Activated T-helper 1 cell treated with anti-CD3 and anti-CD28 coated beads, Interleukin-12 subunit alpha, Interleukin-12 subunit beta, Interleukin-2, Interleukin-4 antibody, amounts not matched to agents 30 ng/mL and 10 ng/mL and 1 ng/mL, durations not matched to agents 14 hours and 24 hours and 36 hours (primary cell): ENCODE measurements at regions of chr9 and their contacts with region 1.

Region 1: GRCh38 chr9:112333639-112334431 is 416 bp upstream of the PTBP3 start:
- DNase-seq: peak; percentile 88
- H3K4me3 Mint-ChIP-seq: peak overlapping the region; percentile 97
- H3K27ac Mint-ChIP-seq: peak overlapping the region; percentile 94
- H3K4me1 Mint-ChIP-seq: peaks cover 31% of the 10 kb centered on the region
- H3K27me3 Mint-ChIP-seq: peaks cover 2% of the 10 kb centered on the region

Region 2: GRCh38 chr9:111195766-111196165 is 1138.1 kb before region 1 on chr9:
- intact Hi-C with region 1: no loop called
- DNase-seq: no peak
- H3K4me3 Mint-ChIP-seq: no peak overlapping the region
- H3K27ac Mint-ChIP-seq: no peak overlapping the region
- H3K4me1 Mint-ChIP-seq: no peaks in the 10 kb centered on the region
- H3K27me3 Mint-ChIP-seq: no peaks in the 10 kb centered on the region

Region 3: GRCh38 chr9:111896353-111896958 is 437.4 kb before region 1 on chr9 and contains the start of gene UGCG:
- intact Hi-C with region 1: loop called (anchors 1 kb)
- DNase-seq: peak; percentile 86
- H3K4me3 Mint-ChIP-seq: peak within 1 kb of the TSS; percentile 90
- H3K27ac Mint-ChIP-seq: peak within 1 kb of the TSS; percentile 87
- H3K4me1 Mint-ChIP-seq: peaks cover 19% of the 10 kb centered on the region
- H3K27me3 Mint-ChIP-seq: peaks cover 4% of the 10 kb centered on the region
- total RNA-seq, gene UGCG: 22.6 and 22.9 TPM in 2 replicates

Region 4: GRCh38 chr9:112097712-112098688 is 235.8 kb before region 1 on chr9:
- intact Hi-C with region 1: loop called (anchors 1 kb)
- DNase-seq: peak; percentile 54
- H3K4me3 Mint-ChIP-seq: no peak overlapping the region
- H3K27ac Mint-ChIP-seq: no peak overlapping the region
- H3K4me1 Mint-ChIP-seq: peaks cover 32% of the 10 kb centered on the region
- H3K27me3 Mint-ChIP-seq: peaks cover 2% of the 10 kb centered on the region

Region 5: DNA sequence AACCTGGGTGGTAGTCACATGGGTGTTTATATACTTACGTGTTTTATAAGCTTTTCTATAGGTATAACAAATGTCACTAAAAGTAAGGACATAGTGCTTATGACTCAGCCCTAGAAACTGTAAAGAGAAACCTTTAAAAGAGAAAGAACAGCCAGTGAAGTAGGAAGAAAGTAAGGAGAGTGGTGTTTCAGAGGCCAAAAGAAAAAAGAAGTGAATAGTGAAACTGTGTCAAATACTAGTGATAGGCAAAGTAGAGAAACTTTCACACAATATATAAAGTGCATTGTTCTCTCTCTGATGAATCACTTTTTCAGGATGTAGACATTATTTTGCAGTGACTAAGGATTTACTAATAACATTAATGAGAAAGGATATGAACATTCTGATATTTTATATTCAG is 84.6 kb before region 1 on chr9:
- intact Hi-C with region 1: loop called (anchors 2 kb)
- DNase-seq: no peak
- H3K4me3 Mint-ChIP-seq: no peak overlapping the region
- H3K27ac Mint-ChIP-seq: peak overlapping the region; percentile 3
- H3K4me1 Mint-ChIP-seq: peaks cover 18% of the 10 kb centered on the region
- H3K27me3 Mint-ChIP-seq: no peaks in the 10 kb centered on the region

Region 6: GRCh38 chr9:112283582-112284253 is 50.1 kb before region 1 on chr9:
- intact Hi-C with region 1: no loop called
- DNase-seq: no peak
- H3K4me3 Mint-ChIP-seq: no peak overlapping the region
- H3K27ac Mint-ChIP-seq: no peak overlapping the region
- H3K4me1 Mint-ChIP-seq: peaks cover 10% of the 10 kb centered on the region
- H3K27me3 Mint-ChIP-seq: no peaks in the 10 kb centered on the region

Region 7: DNA sequence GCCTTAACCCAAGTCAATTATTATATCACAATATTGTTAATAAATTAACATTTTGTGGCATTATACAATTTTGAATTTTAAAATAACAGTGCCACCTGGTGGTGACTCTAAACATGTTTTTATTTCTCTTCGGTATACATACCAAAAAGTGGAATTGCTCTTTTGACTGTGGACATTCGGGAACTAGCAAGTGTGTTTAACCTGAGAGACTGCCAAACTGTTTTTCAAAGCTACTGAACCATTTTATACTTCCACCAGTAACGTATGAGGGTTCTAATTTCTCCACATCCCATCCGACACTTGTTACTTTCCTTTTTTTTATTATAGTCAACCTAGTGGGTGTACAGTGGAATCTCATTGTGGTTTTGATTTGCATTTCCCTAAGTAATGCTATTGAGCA is 27.8 kb after region 1 on chr9:
- intact Hi-C with region 1: loop called (anchors 1 kb)
- DNase-seq: no peak
- H3K4me3 Mint-ChIP-seq: no peak overlapping the region
- H3K27ac Mint-ChIP-seq: no peak overlapping the region
- H3K4me1 Mint-ChIP-seq: peaks cover 12% of the 10 kb centered on the region
- H3K27me3 Mint-ChIP-seq: peaks cover 26% of the 10 kb centered on the region

Region 8: GRCh38 chr9:112520656-112521055 is 186.8 kb after region 1 on chr9:
- intact Hi-C with region 1: no loop called
- DNase-seq: no peak
- H3K4me3 Mint-ChIP-seq: no peak overlapping the region
- H3K27ac Mint-ChIP-seq: no peak overlapping the region
- H3K4me1 Mint-ChIP-seq: no peaks in the 10 kb centered on the region
- H3K27me3 Mint-ChIP-seq: no peaks in the 10 kb centered on the region

Region 9: DNA sequence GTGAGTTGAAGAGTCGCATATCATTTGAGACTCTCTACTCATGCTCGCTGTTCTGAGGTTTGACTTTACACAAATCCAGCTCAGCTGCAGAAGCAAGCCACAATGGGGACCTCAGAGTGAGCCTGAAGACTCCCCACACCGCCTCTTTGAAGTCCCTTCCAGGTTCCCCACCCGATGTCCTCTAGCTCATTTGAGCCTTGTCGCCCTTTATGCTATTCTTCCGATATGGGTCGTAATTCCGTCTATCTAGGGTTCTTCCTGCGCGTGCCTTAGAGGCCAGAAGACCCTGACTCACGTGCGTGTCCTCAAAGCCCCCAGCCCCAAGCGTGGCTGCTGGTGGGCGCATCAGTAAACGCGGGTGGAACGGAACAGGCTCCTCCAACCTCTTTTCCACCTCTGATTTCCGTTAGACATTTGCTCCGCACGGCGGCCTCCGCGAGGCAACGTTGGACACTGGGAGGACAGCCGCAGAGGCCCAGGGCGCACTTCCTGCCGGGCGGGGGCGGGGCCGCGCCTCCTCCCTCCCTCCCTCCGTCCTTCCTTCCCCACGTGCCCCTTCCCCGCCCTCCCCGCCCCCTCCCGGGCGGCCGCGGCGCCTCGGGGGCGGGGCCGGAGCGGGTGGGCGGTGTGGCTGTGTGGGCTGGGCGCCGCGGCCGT is 416.4 kb after region 1 on chr9 and contains the start of gene SNX30:
- intact Hi-C with region 1: loop called (anchors 1 kb)
- DNase-seq: peak; percentile 78
- H3K4me3 Mint-ChIP-seq: peak within 1 kb of the TSS; percentile 86
- H3K27ac Mint-ChIP-seq: peak within 1 kb of the TSS; percentile 88
- H3K4me1 Mint-ChIP-seq: peaks cover 67% of the 10 kb centered on the region
- H3K27me3 Mint-ChIP-seq: peaks cover 5% of the 10 kb centered on the region
- total RNA-seq, gene SNX30: 1.9 and 2.1 TPM in 2 replicates